ENCODE measurements at regions of chr5 and their contacts with region 1.

Region 1: GRCh38 chr5:59188419-59189225 is 605.7 kb downstream of the RAB3C start:
- DNase-seq: peak; percentile 69
- H3K4me3 ChIP-seq: peak overlapping the region in 1 of 4 donors; percentile 28
- H3K27ac ChIP-seq: peak overlapping the region; percentile 42 to 74 (median 57)
- H3K4me1 ChIP-seq: peaks cover 0 to 27% (median 6%) of the 10 kb centered on the region in 4 donors
- H3K27me3 ChIP-seq: no peaks in the 10 kb centered on the region
- CTCF ChIP-seq: peak; percentile 71 to 95 (median 87)
- EP300 ChIP-seq: no peak
- POLR2A ChIP-seq: no peak

Region 2: GRCh38 chr5:58804291-58804690 is 384.3 kb before region 1 on chr5:
- in situ Hi-C with region 1: no loop called
- intact Hi-C with region 1: no loop called
- DNase-seq: no peak
- H3K4me3 ChIP-seq: no peak overlapping the region
- H3K27ac ChIP-seq: no peak overlapping the region
- H3K4me1 ChIP-seq: no peaks in the 10 kb centered on the region
- H3K27me3 ChIP-seq: peaks cover 3% of the 10 kb centered on the region
- CTCF ChIP-seq: no peak
- EP300 ChIP-seq: no peak
- POLR2A ChIP-seq: no peak

Region 3: GRCh38 chr5:59380350-59380951 is 191.8 kb after region 1 on chr5:
- in situ Hi-C with region 1: loop called (anchors 5 to 10 kb)
- intact Hi-C with region 1: loop called (anchors 5 kb)
- DNase-seq: no peak
- H3K4me3 ChIP-seq: no peak overlapping the region
- H3K27ac ChIP-seq: peak overlapping the region; percentile 15 to 60 (median 34)
- H3K4me1 ChIP-seq: peaks cover 0 to 12% (median 0%) of the 10 kb centered on the region in 4 donors
- H3K27me3 ChIP-seq: no peaks in the 10 kb centered on the region
- CTCF ChIP-seq: peak; percentile 43 to 63 (median 56)
- EP300 ChIP-seq: no peak
- POLR2A ChIP-seq: no peak

Region 4: DNA sequence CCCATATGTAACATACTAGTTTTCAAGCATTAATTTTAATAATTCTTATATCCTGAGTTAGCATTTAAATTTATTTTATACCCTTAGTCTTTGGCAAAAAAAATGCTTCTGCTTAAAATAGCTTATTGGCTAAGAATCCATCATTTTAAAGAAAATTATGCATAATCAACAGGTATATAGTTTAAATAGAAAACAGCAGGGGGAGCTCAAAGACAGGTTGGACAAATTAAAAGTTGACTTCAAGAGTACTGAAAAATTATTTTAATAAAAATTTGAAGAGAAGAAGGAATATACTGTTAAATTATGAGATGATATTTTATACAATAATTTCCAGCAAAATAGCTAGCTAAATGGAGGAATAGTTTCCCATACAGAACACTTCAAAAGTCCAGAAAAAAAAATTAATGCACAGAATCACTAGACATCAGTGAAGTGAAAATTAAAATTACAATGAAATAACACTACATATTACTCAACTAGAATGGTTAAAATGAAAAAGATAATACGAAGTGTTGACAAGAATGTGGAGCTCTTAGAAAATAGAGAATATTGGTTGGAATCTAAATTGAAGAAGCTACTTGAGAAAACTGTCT is 317.8 kb after region 1 on chr5:
- in situ Hi-C with region 1: loop called in 1 of 4 experiments (anchors 25 kb)
- intact Hi-C with region 1: no loop called
- DNase-seq: no peak
- H3K4me3 ChIP-seq: no peak overlapping the region
- H3K27ac ChIP-seq: no peak overlapping the region
- H3K4me1 ChIP-seq: peaks cover 0 to 9% (median 4%) of the 10 kb centered on the region in 4 donors
- H3K27me3 ChIP-seq: no peaks in the 10 kb centered on the region
- CTCF ChIP-seq: peak; percentile 53 to 68 (median 59)
- EP300 ChIP-seq: no peak
- POLR2A ChIP-seq: no peak

Region 5: DNA sequence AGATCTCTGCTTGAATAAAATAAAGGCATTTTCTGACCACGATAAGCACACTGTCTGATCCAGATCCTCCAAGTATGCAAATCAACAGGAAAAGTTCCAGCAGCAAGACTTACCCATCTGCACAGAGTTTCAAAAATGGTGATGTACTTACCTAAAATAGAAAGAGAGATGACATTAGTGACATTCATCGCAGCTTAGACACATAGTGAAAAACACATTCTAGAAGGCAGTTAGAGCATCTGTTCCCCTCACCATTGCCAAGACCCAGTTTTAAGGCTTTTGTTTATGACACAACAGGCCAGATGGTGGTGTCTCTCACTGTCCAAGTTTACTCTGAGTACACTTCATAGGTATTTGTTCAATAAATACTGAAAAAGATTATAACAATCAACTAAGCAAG is 497.2 kb after region 1 on chr5:
- in situ Hi-C with region 1: loop called in 2 of 4 experiments (anchors 25 kb)
- intact Hi-C with region 1: no loop called
- DNase-seq: no peak
- H3K4me3 ChIP-seq: no peak overlapping the region
- H3K27ac ChIP-seq: peak overlapping the region in 3 of 4 donors; percentile 27 to 42 (median 30)
- H3K4me1 ChIP-seq: peaks cover 0 to 10% (median 3%) of the 10 kb centered on the region in 4 donors
- H3K27me3 ChIP-seq: no peaks in the 10 kb centered on the region
- CTCF ChIP-seq: no peak
- EP300 ChIP-seq: no peak
- POLR2A ChIP-seq: no peak